Caco-2 (cell line): ENCODE measurements at regions of chrX and their contacts with region 1.

Region 1: DNA sequence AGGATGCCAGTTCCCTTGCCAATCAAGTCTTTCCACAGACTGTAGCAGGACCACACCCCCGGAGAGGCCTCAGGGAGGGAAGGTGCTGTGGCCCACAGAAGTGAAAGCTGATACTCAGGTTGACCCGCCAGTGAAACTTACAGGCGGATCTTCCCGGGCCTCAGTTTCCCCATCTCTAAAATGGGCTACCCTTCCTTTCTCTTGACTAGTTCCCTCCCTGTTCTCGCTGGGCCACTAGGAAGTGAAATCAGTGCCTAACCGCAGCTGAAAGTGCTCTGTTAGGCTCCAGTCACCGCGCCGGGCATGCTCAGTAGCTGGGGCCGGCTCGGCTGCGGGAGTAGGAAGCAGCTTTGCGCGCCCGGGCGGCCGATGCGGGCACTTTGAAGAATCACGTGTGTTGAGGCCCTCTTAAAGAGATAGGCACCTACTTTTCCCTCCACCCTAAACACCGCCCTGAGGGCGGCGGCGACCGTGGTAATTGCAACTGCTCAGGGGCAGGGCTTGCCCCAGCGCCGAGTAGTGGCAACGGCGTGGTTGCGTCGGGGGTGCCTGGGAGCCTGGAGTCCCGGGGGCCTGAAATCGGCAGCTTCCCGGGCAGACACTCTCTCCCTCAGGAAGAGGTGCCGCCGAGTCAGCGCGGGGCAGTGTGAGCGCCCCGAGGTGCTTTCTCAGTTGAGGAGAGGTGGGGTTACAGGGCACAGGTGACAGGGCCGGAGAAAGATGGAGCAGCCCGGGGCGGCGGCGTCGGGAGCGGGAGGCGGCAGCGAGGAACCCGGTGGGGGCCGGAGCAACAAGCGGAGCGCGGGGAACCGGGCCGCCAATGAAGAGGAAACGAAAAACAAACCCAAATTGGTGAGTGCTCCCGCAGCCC is at the start of gene DIAPH2:
- DNase-seq: peak; percentile 83 to 88
- H3K4me3 ChIP-seq: peak within 1 kb of the TSS; percentile 60
- H3K4me3 Mint-ChIP-seq: peak within 1 kb of the TSS; percentile 98
- H3K27ac Mint-ChIP-seq: peak within 1 kb of the TSS; percentile 86
- H3K4me1 ChIP-seq: no peaks in the 10 kb centered on the region
- H3K4me1 Mint-ChIP-seq: no peaks in the 10 kb centered on the region
- H3K27me3 ChIP-seq: no peaks in the 10 kb centered on the region
- H3K27me3 Mint-ChIP-seq: no peaks in the 10 kb centered on the region
- CTCF ChIP-seq: no peak
- total RNA-seq, gene DIAPH2: 16.1 and 18.2 TPM in 2 replicates

Region 2: GRCh38 chrX:96027407-96027806 is 657.2 kb before region 1 on chrX:
- CTCF ChIA-PET with region 1: no interaction called
- POLR2A ChIA-PET with region 1: no interaction called
- intact Hi-C with region 1: no loop called
- DNase-seq: no peak
- H3K4me3 ChIP-seq: no peak overlapping the region
- H3K4me3 Mint-ChIP-seq: no peak overlapping the region
- H3K27ac Mint-ChIP-seq: no peak overlapping the region
- H3K4me1 ChIP-seq: no peaks in the 10 kb centered on the region
- H3K4me1 Mint-ChIP-seq: no peaks in the 10 kb centered on the region
- H3K27me3 ChIP-seq: no peaks in the 10 kb centered on the region
- H3K27me3 Mint-ChIP-seq: no peaks in the 10 kb centered on the region
- CTCF ChIP-seq: no peak

Region 3: DNA sequence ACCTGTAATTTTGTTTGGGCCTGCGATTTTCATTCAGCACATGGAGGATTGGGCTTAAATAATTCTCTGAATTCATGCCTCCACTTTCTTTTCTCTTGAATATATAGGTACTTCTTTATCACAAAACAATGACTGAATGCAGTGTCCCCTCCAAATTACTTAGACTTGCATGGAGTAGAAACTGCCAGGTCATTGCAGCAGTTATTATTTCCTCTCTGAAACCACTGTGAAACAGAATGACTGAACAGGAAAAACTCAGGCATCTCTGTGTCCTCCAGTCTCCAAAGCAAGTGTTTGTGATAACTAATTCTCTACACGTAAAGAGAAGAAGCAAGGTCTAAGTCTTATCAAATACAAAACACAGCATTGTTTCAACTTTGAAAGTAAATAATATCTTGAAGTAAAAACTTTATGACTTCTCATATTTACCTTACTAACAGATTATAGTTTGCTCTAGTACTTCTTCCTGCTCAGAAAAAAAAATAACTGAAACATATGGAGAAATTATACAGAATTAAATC is 144.4 kb before region 1 on chrX:
- CTCF ChIA-PET with region 1: no interaction called
- POLR2A ChIA-PET with region 1: no interaction called
- intact Hi-C with region 1: loop called (anchors 10 kb)
- DNase-seq: no peak
- H3K4me3 ChIP-seq: no peak overlapping the region
- H3K4me3 Mint-ChIP-seq: no peak overlapping the region
- H3K27ac Mint-ChIP-seq: no peak overlapping the region
- H3K4me1 ChIP-seq: peaks cover 7% of the 10 kb centered on the region
- H3K4me1 Mint-ChIP-seq: peaks cover 8% of the 10 kb centered on the region
- H3K27me3 ChIP-seq: no peaks in the 10 kb centered on the region
- H3K27me3 Mint-ChIP-seq: no peaks in the 10 kb centered on the region
- CTCF ChIP-seq: no peak

Region 4: GRCh38 chrX:96713303-96713702 is 28.7 kb after region 1 on chrX:
- CTCF ChIA-PET with region 1: no interaction called
- POLR2A ChIA-PET with region 1: no interaction called
- intact Hi-C with region 1: loop called (anchors 2 kb)
- DNase-seq: peak; percentile 32 to 36
- H3K4me3 ChIP-seq: no peak overlapping the region
- H3K4me3 Mint-ChIP-seq: peak overlapping the region; percentile 48
- H3K27ac Mint-ChIP-seq: no peak overlapping the region
- H3K4me1 ChIP-seq: peaks cover 10% of the 10 kb centered on the region; the same call in 1 of the 2 replicates
- H3K4me1 Mint-ChIP-seq: peaks cover 11% of the 10 kb centered on the region
- H3K27me3 ChIP-seq: no peaks in the 10 kb centered on the region
- H3K27me3 Mint-ChIP-seq: no peaks in the 10 kb centered on the region
- CTCF ChIP-seq: no peak

Region 5: GRCh38 chrX:97199501-97199900 is 514.9 kb after region 1 on chrX:
- CTCF ChIA-PET with region 1: no interaction called
- POLR2A ChIA-PET with region 1: no interaction called
- intact Hi-C with region 1: no loop called
- DNase-seq: no peak
- H3K4me3 ChIP-seq: no peak overlapping the region
- H3K4me3 Mint-ChIP-seq: no peak overlapping the region
- H3K27ac Mint-ChIP-seq: no peak overlapping the region
- H3K4me1 ChIP-seq: no peaks in the 10 kb centered on the region
- H3K4me1 Mint-ChIP-seq: no peaks in the 10 kb centered on the region
- H3K27me3 ChIP-seq: no peaks in the 10 kb centered on the region
- H3K27me3 Mint-ChIP-seq: no peaks in the 10 kb centered on the region
- CTCF ChIP-seq: no peak